ENCODE measurements at regions of chr5 and their contacts with region 1.

Region 1: GRCh38 chr5:131170540-131171275 is at the start of gene LYRM7:
- DNase-seq: peak; percentile 96
- ATAC-seq: peak; percentile 99
- total RNA-seq, gene LYRM7: 16.8 to 18.9 TPM

Region 2: DNA sequence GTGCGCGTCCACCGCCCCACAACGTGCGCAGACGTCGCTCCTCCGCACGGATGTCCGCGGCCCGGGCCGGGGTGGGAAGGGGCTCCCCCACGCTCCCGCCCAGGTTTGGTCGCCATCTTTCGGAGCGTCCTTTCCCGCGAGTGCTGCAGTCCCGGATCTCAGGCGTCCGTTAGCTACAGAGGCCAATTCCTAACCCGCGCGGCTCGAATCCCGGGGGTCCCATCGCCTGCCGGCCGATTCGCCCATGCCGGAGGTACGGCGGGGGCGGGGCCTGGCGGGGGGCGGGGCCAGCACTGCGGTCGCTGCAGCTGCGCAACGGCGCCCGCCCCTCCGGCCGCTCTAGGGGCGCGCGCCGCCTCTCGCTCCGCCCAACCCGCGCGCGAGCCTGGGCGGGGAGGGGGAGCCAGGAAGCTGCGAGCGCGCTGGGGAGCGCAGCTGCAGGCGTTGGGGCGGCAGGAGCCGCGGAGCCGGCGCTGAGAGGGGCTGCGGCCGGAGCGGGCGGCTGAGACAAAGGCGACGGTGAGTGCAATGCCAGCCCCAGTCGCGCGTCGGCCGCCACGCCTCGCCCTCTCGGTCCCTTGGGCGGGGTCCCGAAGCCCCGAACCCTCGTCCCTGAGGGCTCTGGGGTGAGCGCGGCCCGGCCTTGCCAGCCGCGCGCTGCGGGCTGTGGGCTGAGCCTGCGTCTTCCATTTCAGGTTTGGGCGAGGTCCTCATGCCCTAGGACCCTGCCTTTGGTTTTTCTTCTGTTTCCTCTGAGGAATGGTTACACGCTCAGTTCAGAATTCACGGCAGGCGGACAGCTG is 93.1 kb after region 1 on chr5 and contains the start of gene CDC42SE2:
- intact Hi-C with region 1: loop called in 1 of 2 experiments (anchors 5 kb)
- DNase-seq: peak; percentile 87
- ATAC-seq: peak; percentile 99 to 100
- total RNA-seq, gene CDC42SE2: 12.8 to 15.4 TPM

Region 3: DNA sequence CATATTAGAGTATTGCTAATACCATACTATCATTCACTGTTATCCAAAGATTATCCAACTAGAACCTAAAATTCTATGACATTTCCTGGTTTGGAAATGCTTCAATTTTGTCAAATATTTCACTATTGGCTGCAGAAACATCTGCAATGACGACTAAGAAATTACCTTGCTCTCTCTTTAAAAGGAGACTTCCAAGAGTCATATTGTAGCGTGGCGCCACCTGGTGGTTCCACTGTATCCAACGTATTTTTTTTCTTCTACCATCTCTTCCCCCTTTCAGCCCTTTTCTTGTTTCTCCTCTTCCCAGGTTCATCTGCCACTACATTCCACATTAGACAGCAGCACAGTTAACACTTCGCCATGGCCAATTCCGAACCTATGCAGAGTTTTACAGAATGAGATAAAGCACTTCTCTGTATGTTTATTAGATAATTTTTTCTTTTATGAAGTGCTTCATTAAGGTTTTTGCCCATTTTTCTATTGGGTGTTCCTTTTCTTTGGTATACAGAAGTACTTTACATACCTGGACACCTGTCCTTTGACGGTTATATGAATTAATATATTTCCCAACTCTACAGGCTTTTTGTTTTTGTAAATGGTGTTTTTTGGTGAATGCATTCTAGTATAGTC is 246.6 kb after region 1 on chr5:
- intact Hi-C with region 1: loop called in 1 of 2 experiments (anchors 10 kb)
- DNase-seq: peak; percentile 81
- ATAC-seq: peak in 1 of 2 donors; percentile 56

Measured in left cardiac atrium (tissue), 4 donors.